ENCODE measurements at regions of chr17 and their contacts with region 1.

Region 1: DNA sequence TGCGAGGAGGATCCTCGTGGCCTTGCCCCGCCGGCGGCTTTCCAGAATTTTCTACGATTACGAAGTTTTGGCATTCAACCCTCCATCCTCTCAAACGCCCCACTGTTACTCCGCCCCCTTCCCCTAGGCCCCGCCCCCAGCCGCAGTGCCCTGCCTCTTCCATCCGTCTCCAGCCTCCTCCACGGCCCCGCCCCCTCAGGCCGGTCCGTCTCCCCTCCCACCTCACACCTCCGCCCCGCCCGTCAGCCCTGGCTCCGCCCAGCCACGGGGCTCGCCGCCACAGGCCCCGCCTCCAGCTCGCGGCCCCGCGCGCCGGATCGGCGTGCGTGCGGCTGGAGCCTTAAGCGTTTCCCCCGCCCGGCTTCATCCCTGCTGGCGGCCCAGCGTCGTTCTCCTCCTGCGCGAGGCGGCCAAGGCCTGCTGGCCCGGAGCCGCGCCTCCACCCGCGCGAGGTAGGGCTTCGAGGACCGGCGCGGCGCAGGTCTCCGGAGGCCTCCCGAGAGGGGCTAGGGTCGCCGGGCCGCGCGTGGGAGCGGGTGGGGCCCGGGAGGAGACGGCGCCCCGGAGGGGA is at the starts of genes C17orf67 and DGKE:
- DNase-seq: peak; percentile 72
- ATAC-seq: peak; percentile 86
- H3K4me3 ChIP-seq: peak within 1 kb of the TSS; percentile 79
- H3K27ac ChIP-seq: peak within 1 kb of the TSS; percentile 74
- H3K4me1 ChIP-seq: peaks cover 27% of the 10 kb centered on the region
- H3K27me3 ChIP-seq: no peaks in the 10 kb centered on the region
- CTCF ChIP-seq: no peak
- EP300 ChIP-seq: no peak
- POLR2A ChIP-seq: peak; percentile 78
- RAD21 ChIP-seq: no peak
- polyA plus RNA-seq, gene C17orf67: 0.24 to 0.79 TPM
- polyA plus RNA-seq, gene DGKE: 2.8 to 4.1 TPM

Region 2: DNA sequence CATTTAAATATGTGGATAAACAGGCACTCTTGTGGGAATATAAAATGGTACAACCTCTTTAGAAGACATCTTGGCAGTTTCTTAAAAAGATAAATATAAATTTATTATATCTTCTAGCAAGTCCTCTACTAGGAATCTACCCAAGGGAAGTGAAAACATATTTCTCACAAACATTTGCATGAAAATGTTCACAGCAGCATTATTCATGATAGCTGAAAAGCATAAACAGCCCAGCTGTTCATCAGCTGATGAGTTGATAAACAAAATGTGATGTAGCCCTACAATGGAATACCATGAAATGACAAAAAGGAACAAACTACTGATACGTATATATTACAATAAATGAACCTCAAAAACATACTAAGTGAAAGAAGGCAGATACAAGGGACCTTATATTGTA is 12.0 kb after region 1 on chr17:
- CTCF ChIA-PET with region 1: interaction called, 3 read pairs
- POLR2A ChIA-PET with region 1: interaction called, 8 read pairs
- RAD21 ChIA-PET with region 1: interaction called, 6 read pairs
- SMC1A ChIA-PET with region 1: interaction called, 10 read pairs
- in situ Hi-C with region 1: no loop called
- intact Hi-C with region 1: no loop called
- DNase-seq: no peak
- ATAC-seq: peak; percentile 57
- H3K4me3 ChIP-seq: no peak overlapping the region
- H3K27ac ChIP-seq: peak overlapping the region; percentile 33; the same call in 1 of the 2 replicates
- H3K4me1 ChIP-seq: peaks cover 14% of the 10 kb centered on the region
- H3K27me3 ChIP-seq: no peaks in the 10 kb centered on the region
- CTCF ChIP-seq: no peak
- EP300 ChIP-seq: no peak
- POLR2A ChIP-seq: no peak
- RAD21 ChIP-seq: no peak

Region 3: GRCh38 chr17:56867948-56868376 is 34.1 kb after region 1 on chr17:
- CTCF ChIA-PET with region 1: interaction called, 3 read pairs
- POLR2A ChIA-PET with region 1: interaction called, 3 read pairs
- RAD21 ChIA-PET with region 1: interaction called, 10 read pairs
- SMC1A ChIA-PET with region 1: interaction called, 5 read pairs
- in situ Hi-C with region 1: no loop called
- intact Hi-C with region 1: no loop called
- DNase-seq: no peak
- ATAC-seq: no peak
- H3K4me3 ChIP-seq: no peak overlapping the region
- H3K27ac ChIP-seq: peak overlapping the region; percentile 34; the same call in 1 of the 2 replicates
- H3K4me1 ChIP-seq: peaks cover 9% of the 10 kb centered on the region
- H3K27me3 ChIP-seq: no peaks in the 10 kb centered on the region
- CTCF ChIP-seq: no peak
- EP300 ChIP-seq: no peak
- POLR2A ChIP-seq: no peak
- RAD21 ChIP-seq: no peak

Region 4: DNA sequence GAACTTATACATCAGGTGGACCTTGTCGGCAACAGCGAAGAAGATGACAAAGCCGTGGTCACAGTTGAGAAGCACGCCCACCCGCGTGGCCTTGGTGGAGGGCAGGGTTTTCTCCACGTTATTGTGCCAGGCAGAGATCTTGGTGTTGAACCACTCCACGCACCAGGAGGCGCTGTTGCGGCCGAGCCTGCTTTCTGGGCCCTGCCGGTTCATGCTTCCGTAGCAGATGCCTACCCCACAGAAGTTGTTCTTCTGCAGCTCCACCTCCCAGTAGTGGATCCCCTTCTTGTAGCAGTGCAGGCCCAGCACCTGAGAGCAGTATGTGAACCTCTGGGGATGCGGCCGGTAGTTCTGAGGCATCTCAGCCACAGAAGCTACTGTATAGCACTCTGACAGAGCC is 57.9 kb after region 1 on chr17:
- CTCF ChIA-PET with region 1: no interaction called
- POLR2A ChIA-PET with region 1: no interaction called
- RAD21 ChIA-PET with region 1: no interaction called
- SMC1A ChIA-PET with region 1: no interaction called
- in situ Hi-C with region 1: no loop called
- intact Hi-C with region 1: no loop called
- DNase-seq: no peak
- ATAC-seq: no peak
- H3K4me3 ChIP-seq: no peak overlapping the region
- H3K27ac ChIP-seq: no peak overlapping the region
- H3K4me1 ChIP-seq: peaks cover 6% of the 10 kb centered on the region
- H3K27me3 ChIP-seq: no peaks in the 10 kb centered on the region
- CTCF ChIP-seq: 0 out of 6 replicates have a peak, but pooled peaks of 2 of the 3 experiments have one; percentile 17 to 25
- EP300 ChIP-seq: no peak
- POLR2A ChIP-seq: 0 out of 2 replicates have a peak, but pooled peaks have one; percentile 38
- RAD21 ChIP-seq: no peak

Region 5: DNA sequence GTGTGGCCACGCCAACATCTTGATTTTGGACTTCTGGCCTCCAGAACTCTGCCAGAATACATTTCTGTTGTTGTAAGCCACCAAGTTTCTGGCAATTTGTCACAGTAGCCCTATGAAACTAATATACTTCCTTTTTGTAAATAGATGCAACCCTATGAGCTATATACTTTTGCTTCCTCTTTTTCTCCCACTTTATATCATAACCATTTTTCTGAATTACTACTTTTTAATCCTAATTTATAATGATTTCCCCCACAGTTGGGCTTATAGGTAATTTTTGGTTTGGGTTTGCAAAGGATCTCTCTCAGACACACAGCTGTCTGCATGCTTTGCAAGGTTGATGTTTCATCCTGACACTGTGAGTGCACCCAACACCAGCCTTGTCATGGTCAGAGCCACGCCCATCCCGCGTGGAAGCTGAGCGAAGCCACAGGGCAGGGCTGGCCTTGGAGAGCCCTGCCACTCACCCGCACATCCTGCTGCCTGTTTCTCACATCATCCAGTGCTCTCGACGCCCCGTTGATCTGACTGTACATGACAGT is 74.2 kb after region 1 on chr17:
- CTCF ChIA-PET with region 1: interaction called, 4 read pairs
- POLR2A ChIA-PET with region 1: interaction called, 8 read pairs
- RAD21 ChIA-PET with region 1: interaction called, 7 read pairs
- SMC1A ChIA-PET with region 1: interaction called, 4 read pairs
- in situ Hi-C with region 1: no loop called
- intact Hi-C with region 1: loop called (anchors 2 kb)
- DNase-seq: peak; percentile 60
- ATAC-seq: peak; percentile 88
- H3K4me3 ChIP-seq: peak overlapping the region; percentile 79; the same call in 1 of the 2 replicates
- H3K27ac ChIP-seq: peak overlapping the region; percentile 42
- H3K4me1 ChIP-seq: peaks cover 24% of the 10 kb centered on the region
- H3K27me3 ChIP-seq: no peaks in the 10 kb centered on the region
- CTCF ChIP-seq: no peak
- EP300 ChIP-seq: no peak
- POLR2A ChIP-seq: no peak
- RAD21 ChIP-seq: no peak

Region 6: GRCh38 chr17:56945938-56946505 is 112.1 kb after region 1 on chr17:
- CTCF ChIA-PET with region 1: no interaction called
- POLR2A ChIA-PET with region 1: no interaction called
- RAD21 ChIA-PET with region 1: no interaction called
- SMC1A ChIA-PET with region 1: no interaction called
- in situ Hi-C with region 1: no loop called
- intact Hi-C with region 1: no loop called
- DNase-seq: no peak
- ATAC-seq: no peak
- H3K4me3 ChIP-seq: no peak overlapping the region
- H3K27ac ChIP-seq: no peak overlapping the region
- H3K4me1 ChIP-seq: no peaks in the 10 kb centered on the region
- H3K27me3 ChIP-seq: no peaks in the 10 kb centered on the region
- CTCF ChIP-seq: no peak
- EP300 ChIP-seq: no peak
- POLR2A ChIP-seq: no peak
- RAD21 ChIP-seq: no peak

Region 7: DNA sequence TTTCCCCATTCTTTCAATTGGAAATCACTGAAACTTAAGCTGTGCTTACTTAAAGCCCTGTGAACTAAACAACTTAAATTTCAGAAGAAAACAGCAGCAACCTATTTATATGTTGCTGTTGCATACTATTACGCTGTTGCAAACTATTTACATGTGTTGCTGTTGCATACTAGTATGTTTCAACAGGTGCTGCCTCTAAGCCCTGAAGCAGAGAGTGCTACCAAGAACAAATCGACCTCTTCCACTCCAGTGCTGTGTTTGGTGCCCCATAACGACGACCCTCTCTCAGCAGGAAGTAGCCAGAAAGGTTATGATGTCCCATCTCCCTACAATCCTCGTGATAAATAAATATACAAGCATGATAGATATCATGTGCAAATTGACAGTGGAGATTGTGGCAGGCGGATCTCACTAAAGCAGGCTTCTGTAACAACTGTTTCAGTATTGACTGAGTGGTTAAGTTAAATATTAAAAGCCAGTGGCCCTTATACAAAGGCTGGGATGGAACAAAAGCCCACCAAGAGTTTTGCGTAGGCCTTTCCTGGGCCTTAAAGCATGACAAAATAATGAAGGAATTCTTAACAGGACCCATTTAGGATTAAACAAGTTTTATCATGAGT is 138.3 kb after region 1 on chr17:
- CTCF ChIA-PET with region 1: no interaction called
- POLR2A ChIA-PET with region 1: no interaction called
- RAD21 ChIA-PET with region 1: no interaction called
- SMC1A ChIA-PET with region 1: no interaction called
- in situ Hi-C with region 1: no loop called
- intact Hi-C with region 1: no loop called
- DNase-seq: no peak
- ATAC-seq: no peak
- H3K4me3 ChIP-seq: no peak overlapping the region
- H3K27ac ChIP-seq: no peak overlapping the region
- H3K4me1 ChIP-seq: no peaks in the 10 kb centered on the region
- H3K27me3 ChIP-seq: no peaks in the 10 kb centered on the region
- CTCF ChIP-seq: no peak
- EP300 ChIP-seq: no peak
- POLR2A ChIP-seq: no peak
- RAD21 ChIP-seq: no peak

Region 8: DNA sequence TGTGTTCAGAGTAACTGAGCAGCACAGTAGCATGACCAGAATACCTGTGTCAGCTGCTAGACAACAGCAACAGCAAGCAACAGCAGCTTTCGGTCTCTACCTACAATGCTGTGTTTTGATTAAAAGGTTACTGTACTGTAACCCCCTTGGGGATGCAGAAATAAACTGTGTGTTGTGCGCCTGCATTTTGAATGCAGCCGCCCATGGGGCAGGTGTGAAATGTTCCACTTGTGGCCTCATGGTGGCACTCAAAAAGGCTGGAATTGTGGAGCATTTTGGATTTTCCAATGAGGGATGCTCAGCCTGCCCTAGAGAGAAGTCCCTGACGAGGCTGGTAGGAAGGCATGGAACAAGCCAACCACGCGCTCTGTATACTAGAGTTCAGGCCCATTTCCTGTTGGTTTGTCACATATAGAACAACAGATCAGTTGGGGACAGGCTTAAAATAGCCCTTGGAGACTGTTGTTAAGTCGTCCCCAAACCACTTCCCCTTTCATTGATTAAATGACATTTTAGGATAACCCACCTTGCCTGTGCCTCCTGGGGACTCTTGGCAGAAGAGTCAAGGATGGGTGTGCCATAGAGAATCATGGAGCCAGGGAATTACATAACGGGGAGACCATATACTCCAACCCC is 171.2 kb after region 1 on chr17:
- CTCF ChIA-PET with region 1: no interaction called
- POLR2A ChIA-PET with region 1: no interaction called
- RAD21 ChIA-PET with region 1: no interaction called
- SMC1A ChIA-PET with region 1: no interaction called
- in situ Hi-C with region 1: no loop called
- intact Hi-C with region 1: no loop called
- DNase-seq: peak; percentile 71
- ATAC-seq: peak; percentile 89
- H3K4me3 ChIP-seq: no peak overlapping the region
- H3K27ac ChIP-seq: peak overlapping the region; percentile 74
- H3K4me1 ChIP-seq: peaks cover 32% of the 10 kb centered on the region
- H3K27me3 ChIP-seq: no peaks in the 10 kb centered on the region
- CTCF ChIP-seq: peak; percentile 25 to 38 (median 27); a peak in 5 of 6 replicates
- EP300 ChIP-seq: peak; percentile 21 to 66; a peak in 2 of 4 replicates
- POLR2A ChIP-seq: no peak
- RAD21 ChIP-seq: no peak

Region 9: GRCh38 chr17:57084802-57085447 is 251.0 kb after region 1 on chr17 and contains the start of gene AKAP1:
- CTCF ChIA-PET with region 1: interaction called, 3 read pairs
- POLR2A ChIA-PET with region 1: interaction called, 3 read pairs
- RAD21 ChIA-PET with region 1: no interaction called
- SMC1A ChIA-PET with region 1: no interaction called
- in situ Hi-C with region 1: no loop called
- intact Hi-C with region 1: loop called (anchors 10 kb)
- DNase-seq: peak; percentile 72
- ATAC-seq: peak; percentile 84
- H3K4me3 ChIP-seq: peak within 1 kb of the TSS; percentile 89
- H3K27ac ChIP-seq: peak within 1 kb of the TSS; percentile 88
- H3K4me1 ChIP-seq: peaks cover 30% of the 10 kb centered on the region
- H3K27me3 ChIP-seq: no peaks in the 10 kb centered on the region
- CTCF ChIP-seq: peak in 2 of 3 experiments; percentile 19 to 51; a peak in 3 of 6 replicates
- EP300 ChIP-seq: no peak
- POLR2A ChIP-seq: peak; percentile 98
- RAD21 ChIP-seq: peak; percentile 25; the same call in 1 of the 2 replicates
- polyA plus RNA-seq, gene AKAP1: 11.9 to 15.2 TPM